HCT116 (cell line): ENCODE measurements at regions of chr2 and their contacts with region 1.

Region 1: GRCh38 chr2:110105608-110106467 is 9.8 kb downstream of the MALL start:
- DNase-seq: peak; percentile 97
- ATAC-seq: peak; percentile 68
- H3K4me3 ChIP-seq: peak overlapping the region; percentile 4 to 15; a peak in 3 of 4 replicates
- H3K27ac ChIP-seq: peak overlapping the region; percentile 100
- H3K4me1 ChIP-seq: peaks cover 94 to 100% of the 10 kb centered on the region in 2 experiments
- H3K27me3 ChIP-seq: no peaks in the 10 kb centered on the region
- CTCF ChIP-seq: no peak
- POLR2A ChIP-seq: no peak
- RAD21 ChIP-seq: no peak

Region 2: DNA sequence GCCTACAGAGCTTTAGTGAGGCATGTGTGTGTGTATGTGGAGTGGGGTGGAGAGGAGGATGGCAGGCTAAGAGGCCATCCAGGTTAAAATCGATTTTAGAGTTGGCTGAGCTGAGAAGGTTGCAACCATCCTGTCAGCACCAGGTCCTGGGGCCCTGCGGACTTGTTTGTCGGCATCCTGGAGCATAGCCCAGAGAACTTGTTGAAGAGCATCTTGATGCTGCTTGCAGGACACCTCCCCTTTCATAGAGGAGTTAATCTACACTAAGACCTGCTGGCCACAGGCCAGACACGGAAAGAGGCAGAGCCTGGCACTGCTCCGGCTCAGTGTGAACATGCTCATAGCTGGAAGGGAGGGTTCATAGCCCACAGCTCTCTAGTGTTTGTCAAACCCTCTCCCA is 383.8 kb before region 1 on chr2:
- CTCF ChIA-PET with region 1: no interaction called
- POLR2A ChIA-PET with region 1: no interaction called
- RAD21 ChIA-PET with region 1: no interaction called
- intact Hi-C with region 1: no loop called
- DNase-seq: no peak
- ATAC-seq: no peak
- H3K4me3 ChIP-seq: no peak overlapping the region
- H3K27ac ChIP-seq: no peak overlapping the region
- H3K4me1 ChIP-seq: no peaks in the 10 kb centered on the region
- H3K27me3 ChIP-seq: no peaks in the 10 kb centered on the region
- CTCF ChIP-seq: no peak
- POLR2A ChIP-seq: no peak
- RAD21 ChIP-seq: no peak

Region 3: DNA sequence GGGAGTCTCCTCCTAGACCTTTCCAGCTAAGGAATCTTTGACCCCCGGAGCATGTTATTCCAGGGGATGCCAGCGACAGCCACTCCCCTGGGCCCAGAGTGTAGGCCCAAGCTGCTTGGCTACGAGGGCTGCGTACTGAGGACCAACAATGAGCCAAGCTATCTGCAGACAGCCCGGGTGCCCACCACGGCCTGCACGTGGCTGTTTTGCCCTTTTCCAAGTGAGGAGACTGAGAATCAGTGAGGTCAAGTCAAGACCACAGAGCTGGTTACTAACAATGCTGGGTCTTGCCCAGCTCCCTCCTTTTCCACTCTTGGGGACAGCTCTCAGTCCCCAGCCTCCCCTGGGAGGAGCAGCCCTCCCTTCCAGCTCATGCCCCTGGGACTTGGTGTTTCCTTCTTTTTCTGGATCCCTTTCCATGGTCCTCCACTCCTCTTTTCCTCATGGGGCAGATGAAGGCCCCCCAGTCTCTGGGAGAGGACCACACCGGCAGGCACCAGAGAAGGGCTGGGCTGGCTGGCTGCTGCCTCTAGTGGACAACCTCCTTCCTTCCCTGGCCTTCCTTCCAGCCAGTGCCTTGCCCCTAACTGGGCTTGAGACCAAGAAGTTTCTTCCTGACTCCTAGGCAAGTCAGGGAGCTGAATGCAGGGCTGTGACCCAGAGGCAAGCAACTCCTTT is 10.3 kb after region 1 on chr2:
- CTCF ChIA-PET with region 1: interaction called, 41 read pairs
- POLR2A ChIA-PET with region 1: interaction called, 37 read pairs
- RAD21 ChIA-PET with region 1: interaction called in 1 of 2 experiments, 4 read pairs
- intact Hi-C with region 1: no loop called
- DNase-seq: peak; percentile 56
- ATAC-seq: peak; percentile 74
- H3K4me3 ChIP-seq: peak overlapping the region; percentile 85 to 88
- H3K27ac ChIP-seq: peak overlapping the region; percentile 82
- H3K4me1 ChIP-seq: peaks cover 24 to 73% of the 10 kb centered on the region in 2 experiments
- H3K27me3 ChIP-seq: no peaks in the 10 kb centered on the region
- CTCF ChIP-seq: peak in 2 of 3 experiments; percentile 78 to 87; a peak in 4 of 6 replicates
- POLR2A ChIP-seq: no peak
- RAD21 ChIP-seq: no peak

Region 4: GRCh38 chr2:110149330-110150220 is 43.7 kb after region 1 on chr2:
- CTCF ChIA-PET with region 1: no interaction called
- POLR2A ChIA-PET with region 1: interaction called, 3 read pairs
- RAD21 ChIA-PET with region 1: no interaction called
- intact Hi-C with region 1: loop called (anchors 2 kb)
- DNase-seq: peak; percentile 85
- ATAC-seq: peak; percentile 89
- H3K4me3 ChIP-seq: peak overlapping the region in 1 of 2 experiments; percentile 35; a peak in 1 of 4 replicates
- H3K27ac ChIP-seq: peak overlapping the region; percentile 96
- H3K4me1 ChIP-seq: peaks cover 35 to 54% of the 10 kb centered on the region in 2 experiments
- H3K27me3 ChIP-seq: no peaks in the 10 kb centered on the region
- CTCF ChIP-seq: no peak
- POLR2A ChIP-seq: no peak
- RAD21 ChIP-seq: peak; percentile 28; the same call in 1 of the 2 replicates

Region 5: GRCh38 chr2:110219496-110220189 is 113.8 kb after region 1 on chr2:
- CTCF ChIA-PET with region 1: no interaction called
- POLR2A ChIA-PET with region 1: no interaction called
- RAD21 ChIA-PET with region 1: no interaction called
- intact Hi-C with region 1: no loop called
- DNase-seq: no peak
- ATAC-seq: no peak
- H3K4me3 ChIP-seq: no peak overlapping the region
- H3K27ac ChIP-seq: no peak overlapping the region
- H3K4me1 ChIP-seq: no peaks in the 10 kb centered on the region
- H3K27me3 ChIP-seq: no peaks in the 10 kb centered on the region
- CTCF ChIP-seq: no peak
- POLR2A ChIP-seq: no peak
- RAD21 ChIP-seq: no peak